ENCODE measurements at regions of chr12 and their contacts with region 1.

Region 1: DNA sequence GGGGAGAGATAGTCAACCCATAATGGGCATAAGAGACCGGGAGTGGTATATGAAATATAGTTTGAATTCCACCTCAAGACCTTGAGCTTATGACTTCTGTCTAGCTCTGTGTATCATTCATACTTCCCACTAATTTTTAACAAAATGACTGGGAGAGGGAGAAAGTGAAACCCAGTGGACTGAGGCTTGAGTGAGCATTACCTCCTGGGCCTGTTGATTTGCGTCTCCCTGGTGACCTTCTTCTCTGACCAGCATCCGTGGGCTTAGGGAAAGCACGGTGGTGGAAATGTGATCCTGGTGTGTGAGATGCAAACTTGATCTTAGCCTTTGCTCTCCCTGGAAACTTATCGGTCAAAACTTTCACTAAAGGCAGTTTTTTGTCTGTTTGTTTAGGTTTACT is 207.9 kb upstream of the BCL2L14 start:
- DNase-seq: peak in 1 of 42 donors; percentile 49

Region 2: GRCh38 chr12:11922361-11922760 is 59.6 kb after region 1 on chr12:
- intact Hi-C with region 1: no loop called
- DNase-seq: no peak

Region 3: GRCh38 chr12:12024911-12025682 is 162.3 kb after region 1 on chr12:
- intact Hi-C with region 1: loop called (anchors 10 kb)
- DNase-seq: no peak